Kidney (tissue), 22 donors: ENCODE measurements at regions of chr17 and their contacts with region 1.

Region 1: GRCh38 chr17:32783602-32784001 is 93.3 kb downstream of the MYO1D start:
- DNase-seq: peak in 2 of 5 donors; percentile 54 to 77
- H3K4me3 ChIP-seq: no peak overlapping the region
- H3K27ac ChIP-seq: no peak overlapping the region
- H3K4me1 ChIP-seq: no peaks in the 10 kb centered on the region
- H3K27me3 ChIP-seq: no peaks in the 10 kb centered on the region
- CTCF ChIP-seq: peak; percentile 69

Region 2: DNA sequence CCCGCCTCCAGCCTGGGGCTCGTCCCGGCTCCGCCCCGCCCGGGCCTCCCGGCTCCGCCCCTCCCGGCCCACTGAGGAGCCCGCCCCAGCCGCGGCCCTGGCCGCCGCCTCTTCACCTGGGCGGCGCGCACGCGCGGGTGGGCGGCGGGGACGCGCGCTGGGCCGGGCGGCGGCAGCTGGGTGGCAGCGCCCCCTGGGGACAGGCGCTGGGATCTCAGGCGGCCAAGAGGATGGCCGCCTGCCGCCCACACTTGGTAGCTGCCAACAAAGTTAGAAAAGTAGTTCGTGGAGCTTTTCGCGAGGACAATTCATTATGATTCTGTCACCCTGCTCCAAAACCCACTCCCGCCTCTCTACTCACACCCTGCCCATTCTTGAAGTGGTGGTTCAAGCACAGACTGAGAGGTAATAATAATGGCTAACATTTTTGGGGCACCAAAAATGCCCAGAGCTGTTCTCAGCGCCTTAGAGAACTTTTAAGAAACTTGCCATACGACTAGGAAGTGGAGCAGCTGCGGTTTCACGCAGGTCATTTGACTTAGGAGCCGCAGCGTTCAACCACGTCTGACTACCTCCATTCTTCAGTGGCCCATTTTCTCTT is 93.7 kb after region 1 on chr17:
- intact Hi-C with region 1: loop called (anchors 10 kb)
- DNase-seq: peak; percentile 93 to 98 (median 96)
- H3K4me3 ChIP-seq: peak overlapping the region; percentile 49 to 73 (median 56)
- H3K27ac ChIP-seq: peak overlapping the region in 1 of 2 donors; percentile 79
- H3K4me1 ChIP-seq: no peaks in the 10 kb centered on the region
- H3K27me3 ChIP-seq: no peaks in the 10 kb centered on the region
- CTCF ChIP-seq: peak; percentile 90

Region 3: DNA sequence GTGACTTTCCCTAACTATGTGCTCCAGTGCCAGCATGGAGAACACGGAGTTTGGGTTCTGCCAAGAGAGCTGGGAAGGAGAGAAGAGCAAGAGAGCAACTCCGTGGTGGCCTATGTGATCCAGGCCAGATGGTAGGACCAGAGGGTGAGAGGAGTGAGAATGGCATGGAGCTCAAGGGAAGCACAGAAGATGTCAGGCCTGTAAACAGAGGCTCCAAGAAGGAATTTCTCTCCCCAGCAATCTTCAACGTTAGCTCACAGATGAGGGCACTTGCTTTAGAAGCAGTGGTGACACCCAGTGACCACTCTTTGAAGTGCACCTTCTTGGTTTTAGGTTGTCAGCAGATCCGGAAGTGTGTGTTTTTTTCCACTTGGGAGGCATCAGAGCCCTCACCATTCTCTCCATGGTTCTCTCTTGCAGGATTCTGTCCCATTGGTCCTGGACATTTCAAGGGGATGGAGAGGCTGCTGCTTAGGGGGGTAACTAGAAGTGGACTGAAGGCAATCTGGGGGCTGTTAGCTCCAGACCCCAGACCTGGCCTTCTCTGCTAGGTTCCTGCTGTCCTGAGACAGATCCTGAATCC is 126.3 kb after region 1 on chr17:
- intact Hi-C with region 1: loop called (anchors 10 kb)
- DNase-seq: peak in 4 of 5 donors; percentile 77 to 91 (median 87)
- H3K4me3 ChIP-seq: no peak overlapping the region
- H3K27ac ChIP-seq: no peak overlapping the region
- H3K4me1 ChIP-seq: no peaks in the 10 kb centered on the region
- H3K27me3 ChIP-seq: no peaks in the 10 kb centered on the region
- CTCF ChIP-seq: peak; percentile 61

Region 4: DNA sequence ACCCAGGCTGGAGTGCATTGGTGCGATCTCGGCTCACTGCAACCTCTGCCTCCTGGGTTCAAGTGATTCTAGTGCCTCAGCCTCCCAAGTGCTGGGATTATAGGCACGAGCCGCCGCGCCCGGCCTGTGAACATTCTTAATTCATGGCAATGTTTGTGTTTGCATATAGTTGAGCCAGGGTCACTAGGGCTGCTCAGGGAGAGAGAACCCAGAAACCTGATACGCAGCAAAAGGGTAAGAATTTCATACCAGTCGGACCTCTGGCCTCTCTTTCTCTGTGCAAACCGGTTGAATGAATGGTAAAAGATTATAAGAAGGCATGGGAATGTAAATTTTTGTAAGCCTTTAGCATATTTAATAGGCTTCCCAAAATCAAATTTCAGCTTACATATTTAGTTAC is 137.4 kb after region 1 on chr17:
- intact Hi-C with region 1: no loop called
- DNase-seq: no peak
- H3K4me3 ChIP-seq: no peak overlapping the region
- H3K27ac ChIP-seq: no peak overlapping the region
- H3K4me1 ChIP-seq: no peaks in the 10 kb centered on the region
- H3K27me3 ChIP-seq: no peaks in the 10 kb centered on the region
- CTCF ChIP-seq: no peak

Region 5: DNA sequence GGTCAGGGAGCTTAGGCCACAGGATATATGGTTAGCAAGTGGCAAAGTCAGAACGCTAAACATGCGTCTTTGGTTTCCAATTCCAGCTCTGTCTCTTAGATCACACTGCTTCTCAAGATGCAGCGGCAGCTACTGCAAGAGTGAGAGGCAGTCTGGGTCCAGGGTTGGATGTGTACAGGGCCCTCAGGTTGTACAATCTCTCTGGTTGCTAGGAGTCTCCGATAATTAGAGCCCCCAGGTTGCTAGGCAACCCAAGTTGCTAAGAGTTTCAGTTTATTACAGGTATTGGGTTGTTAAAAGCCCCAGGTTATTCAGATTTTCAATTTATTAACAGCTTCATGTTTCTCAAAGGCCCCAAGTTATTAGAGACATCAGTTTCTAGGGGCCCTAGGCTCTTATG is 192.5 kb after region 1 on chr17:
- intact Hi-C with region 1: no loop called
- DNase-seq: no peak
- H3K4me3 ChIP-seq: no peak overlapping the region
- H3K27ac ChIP-seq: no peak overlapping the region
- H3K4me1 ChIP-seq: no peaks in the 10 kb centered on the region
- H3K27me3 ChIP-seq: no peaks in the 10 kb centered on the region
- CTCF ChIP-seq: no peak